PC-9 (cell line): ENCODE measurements at regions of chr22 and their contacts with region 1.

Region 1: DNA sequence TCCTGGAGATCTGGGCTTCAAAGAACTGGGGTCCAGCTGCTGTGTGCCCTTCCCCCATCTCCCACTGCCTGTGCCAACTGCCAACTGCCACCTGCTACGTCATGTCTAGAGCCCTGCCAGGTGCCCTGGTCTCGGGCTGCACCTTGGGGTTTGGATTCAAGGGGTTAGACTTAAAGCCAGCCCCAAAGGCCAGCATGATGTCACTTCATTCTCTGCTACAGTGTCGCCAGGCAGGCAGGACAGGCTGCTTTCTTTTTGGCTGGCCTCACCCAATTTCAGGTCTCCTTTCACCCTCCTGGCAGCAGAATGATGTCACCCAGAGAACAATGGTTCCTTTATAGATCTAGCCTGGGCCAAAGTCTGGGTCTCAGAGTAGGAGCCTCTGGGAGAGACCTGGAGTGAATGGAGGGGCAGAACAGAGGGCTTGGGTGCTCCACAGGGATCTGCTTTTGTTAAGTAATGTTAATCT is 79.5 kb upstream of the CRYBB3 start:
- DNase-seq: peak; percentile 64 to 89
- H3K4me3 ChIP-seq: peak overlapping the region; percentile 10; the same call in 1 of the 2 replicates
- H3K27ac ChIP-seq: peak overlapping the region; percentile 79
- H3K4me1 ChIP-seq: peaks cover 26% of the 10 kb centered on the region
- H3K27me3 ChIP-seq: no peaks in the 10 kb centered on the region
- CTCF ChIP-seq: no peak

Region 2: DNA sequence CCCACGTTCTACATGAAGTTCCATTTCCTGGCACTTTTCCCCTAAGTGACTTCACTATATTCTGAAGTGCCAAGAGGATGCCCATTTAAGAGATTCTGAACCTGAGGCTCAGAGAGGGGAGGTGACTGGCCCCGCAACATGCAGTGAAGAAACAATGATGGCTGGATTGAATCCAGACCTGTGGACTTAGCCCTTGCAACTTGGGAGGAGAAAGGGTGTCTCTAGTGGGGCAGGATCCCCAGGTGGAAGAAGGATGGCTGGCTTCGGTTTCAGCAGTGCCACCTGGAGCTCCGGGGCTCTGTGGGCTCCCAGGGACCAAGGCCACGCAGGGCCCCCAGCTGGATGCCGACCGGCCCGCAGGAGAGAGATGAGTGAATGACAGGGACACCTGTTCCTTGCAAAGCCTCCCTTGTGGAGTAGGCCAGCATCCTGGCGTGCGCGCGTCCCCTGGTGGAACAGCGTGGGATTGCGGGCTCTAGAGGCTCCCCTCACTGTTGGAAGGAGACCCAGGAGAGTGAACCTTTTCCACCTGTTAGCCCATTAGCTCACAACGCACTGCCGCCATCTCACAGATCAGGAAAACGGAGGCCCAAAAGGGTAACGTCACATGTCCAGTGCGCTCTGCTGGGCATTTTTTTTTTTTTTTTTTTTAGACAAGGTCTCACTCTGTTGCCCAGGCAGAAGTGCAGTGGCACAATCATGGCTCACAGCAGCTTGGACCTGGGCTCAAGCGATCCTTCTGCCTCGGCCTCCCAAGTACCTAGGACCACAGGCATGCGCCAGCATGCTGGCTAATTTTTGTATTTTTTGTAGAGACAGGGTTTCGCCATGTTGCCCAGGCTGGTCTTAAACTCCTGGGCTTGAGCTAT is 62.9 kb before region 1 on chr22:
- CTCF ChIA-PET with region 1: no interaction called
- POLR2A ChIA-PET with region 1: no interaction called
- intact Hi-C with region 1: no loop called
- DNase-seq: peak in 1 of 2 experiments; percentile 54
- H3K4me3 ChIP-seq: no peak overlapping the region
- H3K27ac ChIP-seq: no peak overlapping the region
- H3K4me1 ChIP-seq: no peaks in the 10 kb centered on the region
- H3K27me3 ChIP-seq: no peaks in the 10 kb centered on the region
- CTCF ChIP-seq: peak; percentile 91

Region 3: DNA sequence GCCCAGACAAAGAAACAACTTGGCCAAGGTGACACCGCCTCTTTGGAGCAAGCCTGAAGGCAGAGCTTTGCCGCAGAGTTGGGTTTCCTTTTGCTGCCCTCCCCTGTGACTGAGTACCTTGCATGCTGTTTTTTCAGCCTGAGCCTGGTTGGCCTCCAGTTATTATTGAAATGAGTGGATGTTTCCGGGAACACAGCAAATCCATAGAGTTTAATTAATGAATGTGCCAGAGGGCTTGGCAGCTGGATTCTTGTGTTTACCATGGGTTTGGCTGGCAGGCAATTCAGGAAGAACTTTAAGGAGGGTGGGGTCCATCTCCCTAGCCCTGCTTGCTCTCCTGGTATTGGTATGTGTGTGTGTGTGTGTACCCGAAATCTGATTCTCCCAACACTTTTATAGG is 13.9 kb after region 1 on chr22:
- CTCF ChIA-PET with region 1: no interaction called
- POLR2A ChIA-PET with region 1: no interaction called
- intact Hi-C with region 1: loop called (anchors 2 kb)
- DNase-seq: peak; percentile 50 to 91
- H3K4me3 ChIP-seq: no peak overlapping the region
- H3K27ac ChIP-seq: peak overlapping the region; percentile 45
- H3K4me1 ChIP-seq: peaks cover 22% of the 10 kb centered on the region
- H3K27me3 ChIP-seq: no peaks in the 10 kb centered on the region
- CTCF ChIP-seq: no peak